Activated CD4-positive, alpha-beta memory T cell treated with anti-CD3 and anti-CD28 coated beads for 36 hours (primary cell): ENCODE measurements at regions of chr20 and their contacts with region 1.

Region 1: DNA sequence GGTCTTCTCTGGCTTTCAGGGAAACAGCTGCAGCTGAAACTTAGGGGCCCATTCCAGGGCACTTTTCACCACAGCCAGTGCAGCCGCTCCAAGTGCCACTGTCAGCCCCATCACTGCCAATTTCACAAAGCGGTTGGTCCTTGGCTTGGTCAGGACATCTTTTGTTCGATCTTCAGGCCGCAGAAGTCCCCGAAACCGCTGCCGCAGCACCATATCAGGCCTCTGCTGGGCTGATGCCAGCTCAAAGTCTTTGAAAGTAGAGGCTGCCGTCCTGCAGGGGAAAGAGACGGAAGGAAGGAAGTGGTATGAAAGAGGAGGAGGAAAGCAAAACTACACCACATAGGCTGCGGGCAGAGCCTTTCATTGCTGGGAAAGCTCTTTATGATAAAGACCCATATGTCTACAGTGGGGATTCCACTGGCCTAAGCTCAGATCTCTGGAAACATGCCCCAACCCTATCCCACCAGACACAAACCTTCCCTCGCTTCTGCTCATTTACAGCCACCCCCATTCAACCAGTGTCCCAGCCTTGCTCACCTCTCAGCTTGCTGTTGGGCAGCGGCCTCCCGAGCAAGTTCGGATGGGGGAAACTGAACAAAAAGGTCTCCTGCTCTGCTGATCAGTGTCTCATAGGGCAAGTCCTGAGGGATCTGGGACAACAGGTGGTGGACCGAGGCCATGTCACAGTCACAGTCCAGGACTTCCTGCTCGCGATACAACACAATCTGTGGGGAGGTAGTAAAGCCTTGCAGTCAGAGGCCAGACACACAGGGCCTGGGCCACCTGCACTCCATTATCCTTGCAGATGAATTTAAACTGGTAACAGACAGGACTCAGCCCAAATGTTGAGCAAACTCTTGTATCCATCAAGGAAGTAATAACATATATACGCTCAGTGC is 23.5 kb downstream of the TBC1D20 start:
- DNase-seq: peak; percentile 76
- H3K4me3 Mint-ChIP-seq: peak overlapping the region; percentile 55
- H3K27ac Mint-ChIP-seq: peak overlapping the region; percentile 88
- H3K4me1 Mint-ChIP-seq: peaks cover 53% of the 10 kb centered on the region
- H3K27me3 Mint-ChIP-seq: no peaks in the 10 kb centered on the region

Region 2: DNA sequence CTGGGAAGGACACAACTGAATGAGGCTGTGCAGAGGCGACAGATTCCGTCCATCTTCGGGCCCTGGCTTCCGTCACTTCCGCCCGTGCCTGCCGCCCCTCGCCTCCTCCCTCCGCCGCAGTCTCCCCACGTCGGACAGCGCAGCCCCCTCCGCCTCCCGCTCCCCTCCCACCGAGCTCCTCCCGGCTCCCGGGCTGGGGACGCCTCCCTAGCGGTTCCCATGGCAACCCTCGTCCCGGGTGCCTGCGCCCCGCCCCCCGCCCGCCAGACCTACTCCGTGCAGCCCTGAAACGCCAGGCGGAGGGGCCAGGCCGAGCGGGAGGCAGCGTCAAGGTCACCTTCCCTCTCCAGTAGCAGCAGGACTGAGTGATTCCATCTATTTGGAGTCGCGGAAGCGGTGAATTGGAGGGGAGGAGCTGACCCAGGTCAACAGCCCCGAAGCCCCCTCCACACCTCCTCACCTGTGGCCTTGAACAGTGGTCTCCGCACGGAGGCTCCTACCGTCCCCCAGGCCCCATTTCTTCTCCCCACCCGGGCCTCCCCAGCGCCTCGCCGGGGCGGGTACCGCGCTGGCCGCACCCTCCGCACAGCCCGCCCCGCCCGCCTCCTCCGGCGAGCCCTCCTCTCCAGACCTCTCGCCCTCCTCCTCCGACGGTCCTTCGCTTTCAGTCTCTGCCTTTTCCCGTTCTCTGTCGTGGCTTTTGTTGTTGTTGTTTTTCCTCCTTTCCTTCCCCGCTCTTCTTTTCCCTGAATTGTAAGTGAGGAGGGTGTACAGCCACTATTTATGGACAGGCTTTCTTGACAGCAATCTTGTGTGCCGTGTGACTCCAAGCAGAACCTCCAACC is 91.0 kb before region 1 on chr20:
- CTCF ChIA-PET with region 1: no interaction called
- POLR2A ChIA-PET with region 1: no interaction called
- intact Hi-C with region 1: no loop called
- DNase-seq: peak; percentile 76
- H3K4me3 Mint-ChIP-seq: peak overlapping the region; percentile 87
- H3K27ac Mint-ChIP-seq: peak overlapping the region; percentile 14
- H3K4me1 Mint-ChIP-seq: peaks cover 12% of the 10 kb centered on the region
- H3K27me3 Mint-ChIP-seq: no peaks in the 10 kb centered on the region

Region 3: DNA sequence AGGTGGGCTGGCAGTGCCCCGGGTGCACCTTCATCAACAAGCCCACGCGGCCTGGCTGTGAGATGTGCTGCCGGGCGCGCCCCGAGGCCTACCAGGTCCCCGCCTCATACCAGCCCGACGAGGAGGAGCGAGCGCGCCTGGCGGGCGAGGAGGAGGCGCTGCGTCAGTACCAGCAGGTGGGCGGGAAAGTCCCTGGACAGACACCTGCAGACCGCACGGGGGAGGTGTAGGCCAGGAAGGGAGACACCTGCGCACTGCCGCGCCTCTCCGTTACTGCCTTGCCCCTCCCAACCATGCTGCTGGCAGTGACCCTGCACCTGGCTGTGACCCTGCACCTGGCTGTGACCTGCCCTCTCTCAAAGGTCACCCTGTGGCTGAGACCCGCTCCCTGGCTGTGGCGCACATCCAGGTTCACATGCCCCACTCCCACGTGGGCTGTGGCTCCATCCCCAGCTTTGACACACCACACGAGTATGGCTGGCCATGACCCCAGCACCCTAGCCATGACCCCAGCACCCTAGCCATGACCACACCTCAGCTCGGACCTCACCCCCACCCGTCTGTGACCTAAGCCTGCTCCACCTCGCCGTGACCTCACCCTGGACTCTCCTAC is 19.2 kb before region 1 on chr20:
- CTCF ChIA-PET with region 1: no interaction called
- POLR2A ChIA-PET with region 1: no interaction called
- intact Hi-C with region 1: no loop called
- DNase-seq: no peak
- H3K4me3 Mint-ChIP-seq: no peak overlapping the region
- H3K27ac Mint-ChIP-seq: no peak overlapping the region
- H3K4me1 Mint-ChIP-seq: peaks cover 10% of the 10 kb centered on the region
- H3K27me3 Mint-ChIP-seq: no peaks in the 10 kb centered on the region

Region 4: GRCh38 chr20:462199-462991 is 23.6 kb after region 1 on chr20 and contains the start of gene TBC1D20:
- CTCF ChIA-PET with region 1: interaction called, 5 read pairs
- POLR2A ChIA-PET with region 1: no interaction called
- intact Hi-C with region 1: loop called (anchors 2 kb)
- DNase-seq: peak; percentile 88
- H3K4me3 Mint-ChIP-seq: peak within 1 kb of the TSS; percentile 86
- H3K27ac Mint-ChIP-seq: peak within 1 kb of the TSS; percentile 84
- H3K4me1 Mint-ChIP-seq: peaks cover 38% of the 10 kb centered on the region
- H3K27me3 Mint-ChIP-seq: no peaks in the 10 kb centered on the region
- total RNA-seq, gene TBC1D20: 18.8 to 20.4 TPM

Region 5: GRCh38 chr20:543369-544152 is 104.7 kb after region 1 on chr20 and contains the start of gene CSNK2A1:
- CTCF ChIA-PET with region 1: no interaction called
- POLR2A ChIA-PET with region 1: no interaction called
- intact Hi-C with region 1: no loop called
- DNase-seq: peak; percentile 97
- H3K4me3 Mint-ChIP-seq: peak within 1 kb of the TSS; percentile 85
- H3K27ac Mint-ChIP-seq: peak within 1 kb of the TSS; percentile 96
- H3K4me1 Mint-ChIP-seq: peaks cover 48% of the 10 kb centered on the region
- H3K27me3 Mint-ChIP-seq: peaks cover 4% of the 10 kb centered on the region
- total RNA-seq, gene CSNK2A1: 154 to 155 TPM

Region 6: GRCh38 chr20:1415667-1416468 is 977.0 kb after region 1 on chr20:
- CTCF ChIA-PET with region 1: no interaction called
- POLR2A ChIA-PET with region 1: no interaction called
- intact Hi-C with region 1: no loop called
- DNase-seq: peak; percentile 38
- H3K4me3 Mint-ChIP-seq: no peak overlapping the region
- H3K27ac Mint-ChIP-seq: no peak overlapping the region
- H3K4me1 Mint-ChIP-seq: peaks cover 5% of the 10 kb centered on the region
- H3K27me3 Mint-ChIP-seq: no peaks in the 10 kb centered on the region